Naive thymus-derived CD8-positive, alpha-beta T cell (primary cell): ENCODE measurements at regions of chr18 and their contacts with region 1.

Region 1: GRCh38 chr18:12947355-12948041 is at the start of gene SEH1L:
- DNase-seq: peak in 9 of 10 donors; percentile 94 to 100 (median 98)
- ATAC-seq: peak; percentile 78 to 79
- H3K4me3 Mint-ChIP-seq: peak within 1 kb of the TSS; percentile 93 to 99 (median 98)
- H3K27ac Mint-ChIP-seq: peak within 1 kb of the TSS; percentile 91 to 99 (median 98)
- H3K4me1 Mint-ChIP-seq: peaks cover 10 to 53% (median 38%) of the 10 kb centered on the region in 4 donors
- H3K27me3 Mint-ChIP-seq: no peaks in the 10 kb centered on the region
- polyA plus RNA-seq, gene SEH1L: 25.5 to 37.1 (median 35.5) TPM

Region 2: DNA sequence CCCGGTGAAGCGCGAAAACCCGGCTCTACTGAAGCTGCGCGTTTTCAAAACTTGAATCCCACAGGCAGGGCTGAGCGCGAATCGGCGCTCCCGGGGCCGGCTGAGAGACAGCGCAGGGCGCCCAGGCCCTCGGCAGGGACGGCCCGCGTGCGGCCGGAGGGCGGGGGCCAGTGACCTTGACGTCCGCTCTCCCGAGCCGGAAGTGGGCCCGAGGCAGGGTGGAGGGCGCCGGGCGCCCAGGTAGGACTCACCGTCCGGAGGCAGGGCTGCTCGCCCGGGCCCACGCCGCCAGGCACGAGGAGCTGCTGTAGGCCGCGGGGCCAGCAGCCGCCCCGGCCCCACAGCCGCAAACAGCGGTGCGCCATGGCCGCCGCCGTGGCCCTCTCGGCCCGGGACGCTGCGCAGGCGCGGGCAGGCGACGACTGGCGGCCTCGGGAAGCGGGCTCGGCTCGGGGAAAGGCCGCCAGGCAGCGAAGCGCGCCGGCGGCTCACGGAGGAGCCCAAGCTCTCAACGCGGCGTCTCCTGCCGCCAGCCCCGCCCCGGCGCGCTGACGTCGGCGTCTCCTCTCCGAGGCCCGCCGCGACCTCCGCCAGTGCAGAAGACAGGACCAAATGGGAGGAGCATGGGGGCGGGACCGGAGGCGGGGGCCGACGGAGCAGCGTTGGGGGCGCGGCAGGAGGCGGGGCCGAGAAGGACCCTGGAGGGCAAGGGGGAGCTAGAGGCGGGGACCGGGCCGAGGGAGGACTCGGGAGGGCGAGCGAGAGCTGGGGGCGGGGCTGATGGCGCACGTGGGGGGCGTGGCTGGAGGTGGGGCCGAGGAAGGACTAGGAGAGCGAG is 570.6 kb before region 1 on chr18 and contains the start of gene AFG3L2:
- POLR2A ChIA-PET with region 1: interaction called, 30 read pairs
- DNase-seq: peak; percentile 99 to 100 (median 100)
- ATAC-seq: peak; percentile 84 to 87
- H3K4me3 Mint-ChIP-seq: peak within 1 kb of the TSS; percentile 86 to 94 (median 92)
- H3K27ac Mint-ChIP-seq: peak within 1 kb of the TSS; percentile 53 to 94 (median 92)
- H3K4me1 Mint-ChIP-seq: peaks cover 25 to 50% (median 47%) of the 10 kb centered on the region in 4 donors
- H3K27me3 Mint-ChIP-seq: no peaks in the 10 kb centered on the region
- polyA plus RNA-seq, gene AFG3L2: 27.0 to 42.1 (median 37.2) TPM

Region 3: GRCh38 chr18:12702221-12703095 is 245.0 kb before region 1 on chr18 and contains the starts of genes CEP76 and PSMG2:
- POLR2A ChIA-PET with region 1: interaction called, 22 read pairs
- DNase-seq: peak; percentile 74 to 96 (median 82)
- ATAC-seq: peak; percentile 80 to 85
- H3K4me3 Mint-ChIP-seq: peak within 1 kb of the TSS; percentile 90 to 99 (median 97)
- H3K27ac Mint-ChIP-seq: peak within 1 kb of the TSS; percentile 96 to 100 (median 99)
- H3K4me1 Mint-ChIP-seq: peaks cover 31 to 57% (median 48%) of the 10 kb centered on the region in 4 donors
- H3K27me3 Mint-ChIP-seq: no peaks in the 10 kb centered on the region
- polyA plus RNA-seq, gene CEP76: 2.9 to 7.3 (median 4.0) TPM
- polyA plus RNA-seq, gene PSMG2: 110 to 117 (median 113) TPM

Region 4: GRCh38 chr18:12929477-12930083 is 17.9 kb before region 1 on chr18:
- POLR2A ChIA-PET with region 1: no interaction called
- DNase-seq: peak in 1 of 10 donors; percentile 17
- ATAC-seq: no peak
- H3K4me3 Mint-ChIP-seq: no peak overlapping the region
- H3K27ac Mint-ChIP-seq: peak overlapping the region in 1 of 10 donors; percentile 44
- H3K4me1 Mint-ChIP-seq: peaks cover 1 to 13% (median 4%) of the 10 kb centered on the region in 4 donors
- H3K27me3 Mint-ChIP-seq: peaks cover 0 to 5% (median 1%) of the 10 kb centered on the region in 5 donors

Region 5: DNA sequence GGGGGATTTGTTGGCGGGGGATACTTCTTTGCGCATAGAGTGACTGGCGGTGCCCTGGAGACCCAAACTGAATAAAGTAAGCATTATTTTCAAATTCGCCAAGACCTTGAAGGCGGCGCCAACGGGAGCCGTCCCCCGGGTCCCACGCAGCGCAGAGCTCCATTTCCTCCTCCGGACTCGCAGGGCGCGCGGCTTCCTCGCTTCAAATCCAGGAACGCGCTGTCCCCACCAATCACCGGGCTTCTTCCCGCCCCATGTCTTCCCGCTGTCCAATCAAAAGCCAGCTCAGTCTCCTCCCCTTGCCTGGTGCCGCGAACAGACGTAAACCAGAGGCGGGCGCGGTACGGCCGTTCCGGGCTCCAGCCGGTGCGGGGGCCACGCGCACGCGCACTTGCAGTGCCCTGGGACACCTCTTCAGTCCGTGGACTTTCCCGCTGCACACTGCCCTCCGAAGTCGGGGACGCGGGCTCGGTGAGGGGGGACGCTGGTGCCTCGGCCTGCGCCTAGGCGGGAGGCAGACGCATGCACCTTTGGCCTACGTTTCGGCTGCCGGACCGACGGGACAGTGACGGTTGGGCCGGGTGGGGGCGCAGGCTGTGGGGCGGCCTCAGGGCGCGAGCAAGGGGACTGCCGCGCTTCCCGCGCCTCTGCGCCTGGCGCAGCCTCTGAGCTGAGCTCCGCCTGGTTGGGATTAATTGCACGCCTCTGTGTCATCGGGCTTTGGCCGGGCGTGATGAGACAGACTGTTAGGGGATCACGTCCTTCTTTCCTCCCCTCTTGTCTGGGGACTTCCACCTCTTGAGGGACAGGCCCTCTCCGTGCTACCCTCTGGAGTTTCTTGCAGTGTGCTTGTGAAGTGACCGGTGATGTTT is 43.7 kb after region 1 on chr18 and contains the start of gene CEP192:
- POLR2A ChIA-PET with region 1: interaction called, 41 read pairs
- DNase-seq: peak; percentile 95 to 99 (median 97)
- ATAC-seq: peak; percentile 93 to 97
- H3K4me3 Mint-ChIP-seq: peak within 1 kb of the TSS; percentile 89 to 99 (median 97)
- H3K27ac Mint-ChIP-seq: peak within 1 kb of the TSS; percentile 84 to 98 (median 94)
- H3K4me1 Mint-ChIP-seq: peaks cover 18 to 34% (median 20%) of the 10 kb centered on the region in 4 donors
- H3K27me3 Mint-ChIP-seq: no peaks in the 10 kb centered on the region
- polyA plus RNA-seq, gene CEP192: 3.0 to 6.7 (median 5.2) TPM

Region 6: DNA sequence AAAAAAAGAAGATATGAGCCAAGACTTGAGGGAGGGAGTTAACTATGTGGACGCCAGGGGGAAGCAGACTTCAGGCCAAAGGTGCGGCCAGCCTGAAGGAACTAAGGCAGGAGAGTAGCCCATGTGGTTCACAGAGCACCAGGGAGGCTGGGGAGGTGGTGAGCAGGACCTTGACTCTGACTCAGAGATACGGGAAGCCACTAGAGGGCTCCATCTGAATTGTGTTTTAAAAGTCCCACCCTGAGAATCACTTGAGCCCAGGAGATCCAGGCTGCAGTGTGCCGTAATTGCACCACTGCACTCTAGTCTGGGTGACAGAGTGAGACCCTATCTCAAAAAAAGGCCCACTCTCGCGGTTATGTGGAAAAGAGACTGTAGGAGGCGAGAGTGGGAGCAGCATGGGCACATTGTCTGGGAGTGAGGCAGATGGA is 56.0 kb after region 1 on chr18:
- POLR2A ChIA-PET with region 1: no interaction called
- DNase-seq: peak in 1 of 10 donors; percentile 7
- ATAC-seq: no peak
- H3K4me3 Mint-ChIP-seq: no peak overlapping the region
- H3K27ac Mint-ChIP-seq: no peak overlapping the region
- H3K4me1 Mint-ChIP-seq: peaks cover 0 to 17% (median 15%) of the 10 kb centered on the region in 4 donors
- H3K27me3 Mint-ChIP-seq: no peaks in the 10 kb centered on the region

Region 7: DNA sequence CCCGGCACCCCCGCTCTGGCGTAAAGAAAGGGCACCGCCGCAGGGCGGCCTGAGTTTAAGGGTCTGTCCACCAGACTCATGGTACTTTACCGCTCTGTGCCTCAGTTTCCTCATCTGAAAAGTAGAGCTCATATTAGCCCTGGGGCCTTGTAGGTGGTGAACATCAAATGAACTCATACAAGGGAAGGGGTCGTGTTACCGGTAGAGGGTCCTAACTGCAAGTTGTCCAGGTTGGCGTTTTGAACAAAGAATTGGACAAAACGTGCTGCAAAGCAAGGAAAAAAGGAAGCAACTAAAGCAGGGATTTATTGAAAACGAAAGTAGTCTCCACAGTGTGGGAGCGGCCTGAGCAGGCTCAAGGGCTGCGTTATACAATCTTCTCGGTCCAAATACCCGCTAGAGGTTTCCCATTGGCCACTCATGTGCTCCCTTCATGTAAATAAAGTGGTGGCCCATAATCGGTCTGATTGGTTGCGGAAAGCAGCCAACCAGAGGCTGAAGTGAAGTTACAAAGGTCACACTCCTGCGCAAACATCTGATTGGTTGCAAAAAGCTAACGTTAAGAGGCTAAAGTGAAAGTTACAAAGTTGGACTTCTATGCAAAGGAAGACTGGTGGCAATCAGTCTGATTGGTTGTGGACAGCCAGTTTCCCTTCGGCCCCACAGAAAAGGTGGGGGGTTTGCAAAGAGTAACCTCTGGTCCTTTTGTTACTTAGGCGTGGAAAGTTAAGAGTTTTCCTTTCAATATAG is 190.3 kb after region 1 on chr18:
- POLR2A ChIA-PET with region 1: interaction called, 16 read pairs
- DNase-seq: peak; percentile 28 to 91 (median 75)
- ATAC-seq: peak; percentile 81
- H3K4me3 Mint-ChIP-seq: peak overlapping the region; percentile 92 to 100 (median 98)
- H3K27ac Mint-ChIP-seq: peak overlapping the region; percentile 93 to 100 (median 99)
- H3K4me1 Mint-ChIP-seq: peaks cover 12 to 30% (median 26%) of the 10 kb centered on the region in 4 donors
- H3K27me3 Mint-ChIP-seq: no peaks in the 10 kb centered on the region